Natural killer cell (primary cell): ENCODE measurements at regions of chr3 and their contacts with region 1.

Region 1: GRCh38 chr3:64023187-64023848 is at the start of gene PSMD6:
- DNase-seq: peak; percentile 91 to 95
- ATAC-seq: peak; percentile 95 to 99 (median 97)
- H3K4me3 ChIP-seq: peak within 1 kb of the TSS; percentile 88
- H3K4me3 Mint-ChIP-seq: peak within 1 kb of the TSS; percentile 85
- H3K27ac ChIP-seq: peak within 1 kb of the TSS; percentile 80
- H3K27ac Mint-ChIP-seq: peak within 1 kb of the TSS; percentile 84 to 89
- H3K4me1 ChIP-seq: peaks cover 14% of the 10 kb centered on the region
- H3K4me1 Mint-ChIP-seq: peaks cover 22 to 24% of the 10 kb centered on the region in 2 donors
- H3K27me3 ChIP-seq: no peaks in the 10 kb centered on the region
- H3K27me3 Mint-ChIP-seq: peaks cover 12 to 21% of the 10 kb centered on the region in 2 donors
- CTCF ChIP-seq: peak; percentile 99
- total RNA-seq, gene PSMD6: 84.4 to 105 (median 102) TPM

Region 2: GRCh38 chr3:63863148-63864007 is 159.9 kb before region 1 on chr3 and contains the starts of genes ATXN7 and THOC7:
- intact Hi-C with region 1: loop called (anchors 5 kb)
- DNase-seq: peak; percentile 71 to 83
- ATAC-seq: peak; percentile 80 to 89 (median 88)
- H3K4me3 ChIP-seq: peak within 1 kb of the TSS; percentile 61
- H3K4me3 Mint-ChIP-seq: peak within 1 kb of the TSS; percentile 93
- H3K27ac ChIP-seq: peak within 1 kb of the TSS; percentile 65
- H3K27ac Mint-ChIP-seq: peak within 1 kb of the TSS; percentile 89 to 90
- H3K4me1 ChIP-seq: peaks cover 17% of the 10 kb centered on the region
- H3K4me1 Mint-ChIP-seq: peaks cover 45 to 46% of the 10 kb centered on the region in 2 donors
- H3K27me3 ChIP-seq: no peaks in the 10 kb centered on the region
- H3K27me3 Mint-ChIP-seq: no peaks in the 10 kb centered on the region
- CTCF ChIP-seq: no peak
- total RNA-seq, gene ATXN7: 126 to 176 (median 146) TPM
- total RNA-seq, gene THOC7: 30.3 to 35.8 (median 32.5) TPM

Region 3: DNA sequence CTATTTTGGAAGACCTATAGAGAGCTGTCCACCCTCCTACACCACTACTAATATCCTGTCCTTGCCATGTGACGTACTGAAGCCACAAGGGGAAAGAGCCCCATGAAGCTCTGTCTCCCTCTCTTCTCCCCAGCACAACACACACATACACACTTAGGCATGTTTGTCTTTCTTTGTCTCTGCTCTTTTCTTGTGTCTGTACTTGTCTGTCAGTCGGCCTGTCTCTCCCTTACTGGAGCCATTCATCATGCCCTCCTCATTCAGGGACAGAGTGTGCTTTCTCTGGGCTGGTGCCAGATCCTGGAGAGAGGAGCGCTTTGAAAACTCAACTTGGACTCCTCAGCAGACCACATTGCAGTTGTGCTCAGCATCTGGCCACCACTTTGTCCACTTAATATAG is 47.6 kb before region 1 on chr3:
- intact Hi-C with region 1: loop called (anchors 5 kb)
- DNase-seq: no peak
- ATAC-seq: no peak
- H3K4me3 ChIP-seq: no peak overlapping the region
- H3K4me3 Mint-ChIP-seq: no peak overlapping the region
- H3K27ac ChIP-seq: no peak overlapping the region
- H3K27ac Mint-ChIP-seq: peak overlapping the region; percentile 83 to 92
- H3K4me1 ChIP-seq: peaks cover 41% of the 10 kb centered on the region
- H3K4me1 Mint-ChIP-seq: peaks cover 86 to 93% of the 10 kb centered on the region in 2 donors
- H3K27me3 ChIP-seq: no peaks in the 10 kb centered on the region
- H3K27me3 Mint-ChIP-seq: no peaks in the 10 kb centered on the region
- CTCF ChIP-seq: no peak

Region 4: GRCh38 chr3:64011685-64012084 is 11.6 kb before region 1 on chr3:
- intact Hi-C with region 1: no loop called
- DNase-seq: no peak
- ATAC-seq: no peak
- H3K4me3 ChIP-seq: no peak overlapping the region
- H3K4me3 Mint-ChIP-seq: no peak overlapping the region
- H3K27ac ChIP-seq: no peak overlapping the region
- H3K27ac Mint-ChIP-seq: peak overlapping the region; percentile 17 to 47
- H3K4me1 ChIP-seq: no peaks in the 10 kb centered on the region
- H3K4me1 Mint-ChIP-seq: peaks cover 21 to 27% of the 10 kb centered on the region in 2 donors
- H3K27me3 ChIP-seq: no peaks in the 10 kb centered on the region
- H3K27me3 Mint-ChIP-seq: no peaks in the 10 kb centered on the region
- CTCF ChIP-seq: no peak